ENCODE measurements at regions of chr22 and their contacts with region 1.

Region 1: GRCh38 chr22:36387752-36388518 is at the start of gene MYH9:
- DNase-seq: peak; percentile 100
- H3K4me3 ChIP-seq: peak within 1 kb of the TSS; percentile 92 to 100
- H3K27ac ChIP-seq: peak within 1 kb of the TSS; percentile 86 to 95
- H3K4me1 ChIP-seq: peaks cover 14 to 17% of the 10 kb centered on the region in 2 donors
- H3K27me3 ChIP-seq: no peaks in the 10 kb centered on the region
- CTCF ChIP-seq: peak in 1 of 3 experiments; percentile 44
- total RNA-seq, gene MYH9: 1,114 TPM

Region 2: DNA sequence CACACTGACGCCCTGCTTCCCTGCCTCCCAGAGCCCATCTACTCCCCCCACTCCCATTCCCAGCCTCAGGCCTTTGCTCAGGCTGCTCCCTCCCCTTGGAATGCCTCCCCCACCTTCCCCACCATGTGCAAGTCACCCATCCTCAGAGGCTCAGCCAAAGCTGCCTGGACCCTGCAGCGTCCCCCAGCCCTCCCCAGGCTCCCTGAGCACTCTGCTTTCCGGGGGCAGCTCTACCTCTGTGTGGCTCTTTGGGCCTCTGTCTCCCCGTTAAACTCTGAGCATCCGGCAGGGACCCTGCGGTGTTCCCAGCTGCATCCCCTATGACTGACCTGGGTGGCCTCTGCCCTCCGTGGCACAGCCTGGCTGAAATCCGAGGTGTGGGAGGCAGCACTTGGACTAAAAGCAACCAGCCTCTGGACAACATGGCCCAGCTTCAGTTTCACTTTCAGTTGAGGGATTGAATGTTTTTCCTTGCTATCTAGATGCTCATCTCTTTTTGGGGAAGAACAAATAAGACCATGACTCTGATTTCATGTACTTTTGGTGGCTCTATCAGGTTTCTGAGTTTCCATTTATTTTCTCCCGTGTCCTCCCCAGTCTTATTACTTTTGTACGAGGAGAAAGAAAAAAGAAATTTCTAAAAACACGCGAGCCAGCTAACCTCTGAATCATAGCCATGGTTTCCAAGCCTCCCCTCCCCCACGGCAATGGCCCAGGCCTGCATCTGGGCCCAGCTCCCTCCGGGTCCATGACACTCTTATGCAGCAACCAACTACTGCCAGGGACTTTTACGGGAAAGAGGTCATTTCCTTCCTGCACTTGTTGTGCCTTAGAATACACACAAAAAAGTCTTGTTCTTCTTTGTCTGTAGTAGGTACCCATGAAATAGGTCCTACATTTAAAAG is 231.2 kb before region 1 on chr22:
- intact Hi-C with region 1: loop called (anchors 10 kb)
- DNase-seq: peak; percentile 71 to 96
- H3K4me3 ChIP-seq: peak overlapping the region; percentile 50 to 63
- H3K27ac ChIP-seq: peak overlapping the region; percentile 94
- H3K4me1 ChIP-seq: peaks cover 12 to 61% of the 10 kb centered on the region in 2 donors
- H3K27me3 ChIP-seq: no peaks in the 10 kb centered on the region
- CTCF ChIP-seq: no peak

Region 3: DNA sequence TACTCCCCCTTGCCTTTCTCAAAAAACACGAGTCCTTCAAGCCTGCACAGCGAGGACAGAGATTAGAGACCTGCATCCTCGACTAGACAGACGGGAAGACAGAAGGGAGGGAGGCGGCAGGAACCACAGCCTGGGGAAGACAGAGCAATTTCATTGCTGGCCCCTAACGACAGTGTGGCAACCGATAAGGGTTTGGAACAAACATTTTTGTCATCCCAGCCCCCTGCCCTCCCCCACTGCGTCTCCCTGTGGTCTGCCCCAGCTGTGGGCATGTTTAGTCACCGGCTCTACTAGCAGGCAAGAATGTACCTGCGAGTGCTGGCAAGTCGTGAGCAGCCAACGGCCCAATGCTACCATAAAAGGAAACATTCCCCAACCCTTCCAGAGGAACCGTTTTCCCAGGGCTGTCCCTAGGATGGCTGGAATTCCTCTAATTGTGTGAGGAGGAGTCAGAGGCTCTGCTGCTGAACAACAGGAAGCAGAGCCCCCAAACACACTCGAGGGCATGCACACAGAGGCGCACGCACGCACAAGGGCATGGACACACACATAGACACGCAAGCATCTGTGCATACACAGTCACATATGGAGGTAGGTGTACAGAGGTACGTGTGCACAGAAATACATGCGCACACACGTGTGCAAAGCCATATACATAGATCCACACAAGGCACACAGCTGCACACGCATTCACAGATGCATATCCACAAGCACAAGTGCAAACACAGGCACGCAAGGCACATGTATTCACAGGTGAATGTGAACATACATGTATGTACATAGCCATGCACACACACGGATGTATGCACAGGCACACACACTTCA is 58.5 kb before region 1 on chr22:
- intact Hi-C with region 1: loop called (anchors 1 kb)
- DNase-seq: peak; percentile 66 to 97
- H3K4me3 ChIP-seq: peak overlapping the region; percentile 34 to 40
- H3K27ac ChIP-seq: peak overlapping the region; percentile 98 to 99
- H3K4me1 ChIP-seq: peaks cover 76 to 95% of the 10 kb centered on the region in 2 donors
- H3K27me3 ChIP-seq: no peaks in the 10 kb centered on the region
- CTCF ChIP-seq: no peak

Region 4: GRCh38 chr22:36454916-36455570 is 67.1 kb after region 1 on chr22:
- intact Hi-C with region 1: loop called (anchors 1 kb)
- DNase-seq: peak; percentile 78 to 96
- H3K4me3 ChIP-seq: peak overlapping the region; percentile 58 to 80
- H3K27ac ChIP-seq: peak overlapping the region; percentile 94 to 98
- H3K4me1 ChIP-seq: peaks cover 30 to 42% of the 10 kb centered on the region in 2 donors
- H3K27me3 ChIP-seq: no peaks in the 10 kb centered on the region
- CTCF ChIP-seq: no peak

Region 5: DNA sequence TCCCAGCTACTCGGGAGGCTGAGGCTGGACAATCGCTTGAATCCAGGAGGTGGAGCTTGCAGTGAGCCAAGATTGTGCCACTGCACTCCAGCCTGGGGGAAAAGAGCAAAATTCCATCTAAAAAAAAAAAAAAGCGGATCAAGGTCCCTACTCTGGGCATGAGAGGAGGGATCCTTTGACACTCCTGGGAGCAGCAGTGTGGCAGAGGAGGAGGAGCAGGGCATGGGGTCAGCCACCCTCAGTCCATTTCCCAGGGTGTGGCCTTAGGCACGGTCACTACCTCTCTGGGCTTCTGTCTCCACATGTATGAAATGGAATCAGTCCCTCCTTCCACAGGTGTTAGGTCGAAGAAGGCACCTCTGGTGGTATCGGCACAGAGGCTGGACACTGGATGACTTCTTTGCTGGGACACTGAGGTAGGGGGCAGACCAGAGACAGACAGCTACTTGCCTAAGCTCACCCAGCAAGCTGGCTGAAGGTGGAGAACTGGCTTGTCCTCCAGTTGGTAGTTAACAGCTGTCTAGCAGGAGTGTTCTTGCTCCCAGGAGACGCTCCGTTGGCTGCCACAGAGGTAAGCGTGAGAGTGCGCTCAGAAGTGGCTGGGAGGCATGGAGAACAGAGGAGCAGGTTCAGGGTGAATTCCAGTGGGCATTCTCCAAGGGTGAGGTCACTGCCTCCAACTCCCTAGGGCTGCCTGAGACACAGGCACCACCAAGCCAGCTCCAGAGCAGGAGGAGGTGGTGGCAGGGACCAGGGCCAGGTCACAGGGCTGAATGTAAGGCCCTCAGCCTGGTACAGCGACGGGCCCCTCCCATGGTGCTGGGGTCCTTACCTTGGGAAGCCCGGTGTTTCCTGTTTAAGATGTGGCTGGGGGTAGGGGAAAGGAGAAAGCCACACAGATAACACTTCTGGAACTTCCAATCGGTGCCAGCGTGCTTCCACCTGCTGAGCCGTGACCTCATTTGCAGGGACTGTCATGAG is 74.0 kb after region 1 on chr22:
- intact Hi-C with region 1: loop called (anchors 2 kb)
- DNase-seq: peak in 1 of 2 donors; percentile 95
- H3K4me3 ChIP-seq: no peak overlapping the region
- H3K27ac ChIP-seq: peak overlapping the region; percentile 96 to 97
- H3K4me1 ChIP-seq: peaks cover 30 to 67% of the 10 kb centered on the region in 2 donors
- H3K27me3 ChIP-seq: no peaks in the 10 kb centered on the region
- CTCF ChIP-seq: no peak

Region 6: GRCh38 chr22:36470162-36470993 is 82.4 kb after region 1 on chr22:
- intact Hi-C with region 1: loop called (anchors 1 kb)
- DNase-seq: peak in 1 of 2 donors; percentile 93
- H3K4me3 ChIP-seq: peak overlapping the region in 1 of 2 donors; percentile 26
- H3K27ac ChIP-seq: peak overlapping the region; percentile 96 to 97
- H3K4me1 ChIP-seq: peaks cover 31 to 52% of the 10 kb centered on the region in 2 donors
- H3K27me3 ChIP-seq: no peaks in the 10 kb centered on the region
- CTCF ChIP-seq: peak; percentile 94 to 95 (median 95)

Region 7: DNA sequence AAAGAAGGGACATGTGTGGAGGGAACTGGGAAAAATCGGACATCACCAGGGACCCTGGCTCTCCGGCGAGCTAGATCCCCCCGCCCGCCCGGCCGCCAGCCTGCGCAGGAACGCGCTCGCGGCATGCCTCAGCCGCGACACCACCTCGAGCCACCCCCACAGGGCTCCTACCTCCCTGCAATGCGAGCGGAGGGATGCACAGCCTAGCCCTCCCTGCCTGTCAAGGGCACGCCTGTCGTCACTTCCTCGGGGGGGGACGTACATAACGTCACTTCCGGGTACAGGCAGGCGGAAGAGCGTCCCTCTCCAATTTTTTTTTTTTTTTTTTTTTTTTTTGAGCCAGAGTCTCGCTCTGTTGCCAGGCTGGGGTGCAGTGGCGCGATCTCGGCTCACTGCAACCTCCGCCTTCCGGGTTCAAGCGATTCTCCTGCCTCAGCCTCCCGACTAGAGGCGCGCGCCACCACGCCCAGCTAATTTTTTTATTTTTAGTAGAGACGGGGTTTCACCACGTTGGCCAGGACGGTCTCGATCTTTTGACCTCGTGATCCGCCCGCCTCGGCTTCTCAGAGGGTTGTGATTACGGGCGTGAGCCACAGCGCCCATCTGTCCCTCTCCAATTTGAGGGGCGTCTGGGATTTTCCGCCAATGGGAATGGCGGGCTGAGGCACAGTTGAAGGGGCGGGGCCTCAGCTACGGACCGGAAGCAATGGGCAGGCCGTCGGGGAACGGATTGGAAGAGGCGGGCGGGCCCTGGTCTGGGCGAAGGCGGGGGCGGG is 93.6 kb after region 1 on chr22 and contains the start of gene TXN2:
- intact Hi-C with region 1: loop called (anchors 1 kb)
- DNase-seq: peak; percentile 85 to 98
- H3K4me3 ChIP-seq: peak within 1 kb of the TSS; percentile 58 to 77
- H3K27ac ChIP-seq: peak within 1 kb of the TSS; percentile 92 to 99
- H3K4me1 ChIP-seq: peaks cover 8 to 10% of the 10 kb centered on the region in 2 donors
- H3K27me3 ChIP-seq: no peaks in the 10 kb centered on the region
- CTCF ChIP-seq: no peak
- total RNA-seq, gene TXN2: 16.2 TPM

Measured in ascending aorta (tissue), 2 donors.